ENCODE measurements at regions of chr3 and their contacts with region 1.

Region 1: GRCh38 chr3:57169872-57170623 is 4.9 kb upstream of the IL17RD start:
- DNase-seq: peak; percentile 83
- ATAC-seq: peak; percentile 75

Region 2: DNA sequence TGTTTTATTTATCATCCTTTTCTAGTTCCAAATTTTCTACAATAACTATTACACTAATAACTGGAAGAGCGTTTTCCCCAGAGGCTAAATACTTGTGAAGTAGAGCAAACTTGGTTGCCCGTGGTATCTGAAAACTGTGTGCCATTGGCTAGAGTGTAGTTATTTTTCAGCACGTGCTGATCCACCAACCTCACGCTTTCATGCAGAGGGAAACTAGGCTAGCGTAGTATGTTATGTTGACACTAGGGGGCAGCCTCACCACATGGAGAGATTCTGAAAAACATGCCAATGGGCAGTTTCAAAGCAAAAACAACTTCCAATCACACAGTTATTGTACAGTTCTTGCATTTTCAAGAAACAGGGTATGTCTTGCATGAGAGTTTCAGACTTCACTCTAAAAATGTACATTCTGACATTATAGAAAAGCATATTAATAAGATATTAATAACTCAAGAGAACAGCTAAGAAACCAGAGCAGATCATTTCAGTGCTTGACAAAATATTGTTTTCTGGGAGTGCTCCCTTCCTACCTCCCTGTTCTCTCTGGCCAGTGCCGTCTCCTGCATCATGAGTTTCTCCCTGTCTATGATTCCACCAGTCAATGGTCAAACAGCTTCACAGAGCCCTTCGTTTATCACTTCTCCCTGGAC is 69.9 kb before region 1 on chr3:
- intact Hi-C with region 1: loop called (anchors 5 kb)
- DNase-seq: no peak
- ATAC-seq: peak; percentile 65

Region 3: GRCh38 chr3:57141719-57142410 is 28.2 kb before region 1 on chr3:
- intact Hi-C with region 1: no loop called
- DNase-seq: no peak
- ATAC-seq: no peak